Caco-2 (cell line): ENCODE measurements at regions of chr6 and their contacts with region 1.

Region 1: GRCh38 chr6:150915880-150916265 is 50.4 kb downstream of the MTHFD1L start:
- DNase-seq: no peak
- H3K4me3 ChIP-seq: no peak overlapping the region
- H3K4me3 Mint-ChIP-seq: no peak overlapping the region
- H3K27ac Mint-ChIP-seq: no peak overlapping the region
- H3K4me1 ChIP-seq: peaks cover 11% of the 10 kb centered on the region
- H3K4me1 Mint-ChIP-seq: peaks cover 7% of the 10 kb centered on the region
- H3K27me3 ChIP-seq: no peaks in the 10 kb centered on the region
- H3K27me3 Mint-ChIP-seq: no peaks in the 10 kb centered on the region
- CTCF ChIP-seq: no peak

Region 2: GRCh38 chr6:151067684-151068596 is 152.1 kb after region 1 on chr6:
- CTCF ChIA-PET with region 1: no interaction called
- POLR2A ChIA-PET with region 1: no interaction called
- intact Hi-C with region 1: loop called (anchors 10 kb)
- DNase-seq: no peak
- H3K4me3 ChIP-seq: no peak overlapping the region
- H3K4me3 Mint-ChIP-seq: no peak overlapping the region
- H3K27ac Mint-ChIP-seq: no peak overlapping the region
- H3K4me1 ChIP-seq: 0 out of 2 replicates have a peak, but pooled peaks cover 6% of the 10 kb centered on the region
- H3K4me1 Mint-ChIP-seq: peaks cover 6% of the 10 kb centered on the region
- H3K27me3 ChIP-seq: no peaks in the 10 kb centered on the region
- H3K27me3 Mint-ChIP-seq: no peaks in the 10 kb centered on the region
- CTCF ChIP-seq: no peak